SK-N-SH (cell line): ENCODE measurements at regions of chr6 and their contacts with region 1.

Region 1: DNA sequence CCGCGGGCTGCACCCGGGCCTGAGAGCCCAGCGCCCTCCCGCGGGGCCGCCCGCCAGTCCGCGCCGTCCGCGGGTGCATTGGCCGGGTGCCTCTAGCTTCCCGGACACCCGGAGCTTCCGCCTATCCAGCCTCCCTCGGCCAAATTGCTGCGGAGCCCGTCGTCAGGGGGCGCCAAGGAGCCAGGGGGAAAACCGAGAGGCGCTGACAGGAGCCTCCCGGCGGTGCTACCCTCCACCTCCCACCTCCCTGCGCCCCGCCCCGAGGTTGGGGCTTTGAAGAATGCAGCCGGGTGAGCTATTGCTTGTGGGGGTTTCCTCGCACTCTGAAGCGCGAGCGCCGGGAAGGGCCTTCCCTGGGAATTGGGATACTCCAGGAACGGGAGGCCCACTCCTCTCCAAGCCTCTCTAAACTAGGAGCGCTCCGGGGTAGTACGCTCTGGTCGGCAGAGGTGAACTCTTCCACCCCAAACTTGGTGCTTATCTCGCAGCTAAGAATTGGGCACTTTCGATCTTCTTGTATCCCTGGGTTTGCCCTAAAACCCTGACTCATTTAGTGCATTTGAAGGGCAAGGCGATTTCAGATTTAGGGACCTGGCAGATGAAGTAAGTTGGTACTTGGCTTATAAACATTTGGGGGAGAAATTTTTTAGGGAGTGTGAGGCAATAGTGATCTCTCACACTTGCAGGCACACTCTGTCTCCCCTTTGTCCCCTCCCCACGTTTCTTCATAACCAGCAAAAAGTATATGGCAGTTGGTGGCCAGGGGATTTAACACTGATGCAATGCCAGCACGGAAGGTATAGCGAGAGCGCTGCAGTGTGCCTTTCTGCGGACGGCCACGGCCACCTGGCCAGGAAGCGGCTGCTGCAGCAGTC is 501 bp downstream of the BEND6 start:
- DNase-seq: peak; percentile 67
- H3K4me3 ChIP-seq: peak overlapping the region; percentile 76 to 92
- H3K27ac ChIP-seq: peak overlapping the region; percentile 76 to 84
- H3K4me1 ChIP-seq: peaks cover 7 to 49% of the 10 kb centered on the region in 2 experiments
- H3K27me3 ChIP-seq: no peaks in the 10 kb centered on the region
- CTCF ChIP-seq: peak; percentile 87
- EP300 ChIP-seq: peak in 1 of 2 experiments; percentile 68; a peak in 1 of 4 replicates
- RAD21 ChIP-seq: peak; percentile 55

Region 2: DNA sequence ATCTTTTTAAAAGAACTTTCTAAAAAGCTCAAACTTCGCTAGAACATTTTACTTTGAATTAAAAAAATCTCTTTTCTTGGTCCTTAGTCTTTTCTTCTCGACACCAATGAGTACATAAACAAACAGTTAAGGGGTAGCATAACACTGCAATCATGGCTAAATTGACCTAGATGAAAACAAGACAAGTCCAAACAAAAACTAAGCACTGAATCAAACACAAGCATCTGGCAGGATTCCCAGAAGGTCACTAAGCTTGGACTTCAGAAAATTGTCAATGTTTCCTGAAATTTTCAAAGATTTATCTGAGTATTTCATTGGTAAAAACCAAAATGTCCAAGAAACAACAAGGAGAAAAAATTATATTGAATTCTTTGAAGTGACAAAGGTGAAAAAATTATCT is 713.1 kb before region 1 on chr6:
- CTCF ChIA-PET with region 1: no interaction called
- POLR2A ChIA-PET with region 1: no interaction called
- DNase-seq: no peak
- H3K4me3 ChIP-seq: no peak overlapping the region
- H3K27ac ChIP-seq: no peak overlapping the region
- H3K4me1 ChIP-seq: no peaks in the 10 kb centered on the region; a peak in 1 of 4 replicates
- H3K27me3 ChIP-seq: peaks cover 4% of the 10 kb centered on the region; the same call in 1 of the 2 replicates
- CTCF ChIP-seq: no peak
- EP300 ChIP-seq: no peak
- RAD21 ChIP-seq: no peak

Region 3: GRCh38 chr6:56911847-56912246 is 43.6 kb before region 1 on chr6:
- CTCF ChIA-PET with region 1: interaction called, 18 read pairs
- POLR2A ChIA-PET with region 1: no interaction called
- DNase-seq: no peak
- H3K4me3 ChIP-seq: no peak overlapping the region
- H3K27ac ChIP-seq: peak overlapping the region; percentile 50 to 55; a peak in 3 of 4 replicates
- H3K4me1 ChIP-seq: peaks cover 10 to 26% of the 10 kb centered on the region in 2 experiments; a peak in 3 of 4 replicates
- H3K27me3 ChIP-seq: no peaks in the 10 kb centered on the region
- CTCF ChIP-seq: no peak
- EP300 ChIP-seq: no peak
- RAD21 ChIP-seq: no peak

Region 4: DNA sequence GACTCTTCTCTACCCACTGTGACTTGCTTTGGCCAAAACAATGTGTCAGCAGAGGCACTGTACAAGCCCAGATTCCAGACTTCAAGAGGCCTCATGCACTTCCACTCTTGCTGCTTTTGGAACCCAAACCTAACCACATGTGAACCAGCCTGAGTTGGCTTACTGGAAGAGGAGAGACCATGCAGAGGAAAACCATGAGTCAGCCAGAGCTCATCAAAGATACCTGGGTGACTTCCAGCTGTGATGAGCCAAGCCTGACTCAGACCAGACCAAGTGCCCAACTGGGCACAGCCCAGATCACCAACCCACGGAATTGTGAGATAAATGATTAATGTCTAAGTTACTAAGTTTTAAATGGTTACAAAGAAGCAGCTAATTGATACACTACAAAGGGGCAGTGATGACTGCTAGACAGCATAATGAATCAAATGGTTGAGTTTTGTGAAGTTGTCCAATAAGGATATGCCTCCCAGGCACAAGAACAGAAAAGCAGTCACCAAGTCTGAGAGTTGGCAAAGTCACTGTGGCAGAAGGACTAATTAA is 16.7 kb before region 1 on chr6:
- CTCF ChIA-PET with region 1: interaction called, 15 read pairs
- POLR2A ChIA-PET with region 1: no interaction called
- DNase-seq: no peak
- H3K4me3 ChIP-seq: no peak overlapping the region
- H3K27ac ChIP-seq: peak overlapping the region; percentile 41 to 85; a peak in 3 of 4 replicates
- H3K4me1 ChIP-seq: no peaks in the 10 kb centered on the region; a peak in 1 of 4 replicates
- H3K27me3 ChIP-seq: no peaks in the 10 kb centered on the region
- CTCF ChIP-seq: no peak
- EP300 ChIP-seq: peak; percentile 10 to 97
- RAD21 ChIP-seq: no peak